Caco-2 (cell line): ENCODE measurements at regions of chr11 and their contacts with region 1.

Region 1: DNA sequence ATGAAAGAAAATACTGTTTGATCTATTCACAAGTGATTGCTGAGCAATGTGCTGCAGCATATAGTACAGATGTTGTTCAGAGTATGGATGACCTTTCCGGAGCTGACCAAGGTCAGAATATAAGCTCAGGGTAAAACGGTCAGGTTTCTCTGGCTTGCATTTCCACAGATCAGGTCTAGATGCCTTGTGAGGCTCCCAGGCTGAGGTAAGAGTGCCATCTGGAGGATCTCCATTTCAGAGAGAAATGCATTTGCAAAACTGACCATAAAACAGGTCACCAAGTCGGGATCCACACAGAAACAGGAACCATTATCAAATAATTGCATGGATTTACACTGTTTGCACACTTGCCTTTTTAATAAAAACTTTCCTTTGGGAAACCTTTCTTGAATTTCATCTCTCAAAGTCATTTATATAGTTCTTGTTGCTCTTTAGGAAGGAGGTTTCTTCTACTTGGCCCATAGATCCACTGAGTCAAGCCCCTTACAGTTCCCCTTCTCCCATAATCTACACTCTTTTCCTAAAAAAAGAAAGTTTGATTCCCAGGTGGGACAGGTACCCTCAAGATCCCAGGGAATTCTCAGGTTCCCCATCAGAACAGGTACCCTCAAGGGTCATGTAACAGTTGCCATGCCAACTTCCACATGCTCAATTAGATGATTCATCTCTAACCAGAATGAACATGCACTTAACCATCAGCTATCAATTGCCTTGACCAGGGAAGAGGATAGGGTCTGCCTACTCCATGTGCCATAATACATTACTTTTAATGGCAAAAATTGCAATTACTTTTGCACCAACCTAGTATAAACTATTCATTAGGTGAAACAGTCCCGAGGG is 25.0 kb upstream of the TMPRSS5 start:
- DNase-seq: peak; percentile 83 to 86
- H3K4me3 ChIP-seq: no peak overlapping the region
- H3K4me3 Mint-ChIP-seq: no peak overlapping the region
- H3K27ac Mint-ChIP-seq: no peak overlapping the region
- H3K4me1 ChIP-seq: peaks cover 45% of the 10 kb centered on the region
- H3K4me1 Mint-ChIP-seq: peaks cover 27% of the 10 kb centered on the region
- H3K27me3 ChIP-seq: no peaks in the 10 kb centered on the region
- H3K27me3 Mint-ChIP-seq: no peaks in the 10 kb centered on the region
- CTCF ChIP-seq: peak; percentile 89 to 92

Region 2: DNA sequence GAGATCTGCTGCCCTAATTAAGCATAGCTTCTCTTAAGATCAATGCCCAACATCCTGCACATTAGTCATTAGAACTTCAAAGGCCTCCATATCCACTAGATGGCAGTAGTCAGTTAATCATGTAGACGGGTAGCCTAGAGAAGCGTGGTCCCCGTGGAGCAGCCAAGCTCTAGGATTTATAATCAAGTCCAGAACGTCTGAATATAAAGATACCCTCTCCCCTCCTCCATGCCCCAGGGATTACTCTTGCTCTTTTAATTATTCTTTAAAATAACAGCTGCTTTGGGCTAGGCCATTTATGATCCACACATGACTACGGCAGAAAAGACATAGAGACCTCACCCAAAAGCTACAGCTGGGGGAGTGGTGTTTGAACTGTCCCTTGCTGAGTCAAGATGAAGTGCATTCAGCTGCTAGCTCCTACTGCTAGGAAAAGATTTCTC is 1142.8 kb before region 1 on chr11:
- CTCF ChIA-PET with region 1: no interaction called
- POLR2A ChIA-PET with region 1: no interaction called
- intact Hi-C with region 1: loop called (anchors 5 kb)
- DNase-seq: peak; percentile 69 to 81
- H3K4me3 ChIP-seq: no peak overlapping the region
- H3K4me3 Mint-ChIP-seq: no peak overlapping the region
- H3K27ac Mint-ChIP-seq: no peak overlapping the region
- H3K4me1 ChIP-seq: no peaks in the 10 kb centered on the region
- H3K4me1 Mint-ChIP-seq: no peaks in the 10 kb centered on the region
- H3K27me3 ChIP-seq: no peaks in the 10 kb centered on the region; the same call in none of the 2 replicates
- H3K27me3 Mint-ChIP-seq: peaks cover 14% of the 10 kb centered on the region
- CTCF ChIP-seq: peak; percentile 74 to 90

Region 3: GRCh38 chr11:113314389-113315301 is 416.5 kb before region 1 on chr11 and contains the start of gene TTC12:
- CTCF ChIA-PET with region 1: interaction called, 14 read pairs
- POLR2A ChIA-PET with region 1: interaction called, 18 read pairs
- intact Hi-C with region 1: loop called (anchors 1 kb)
- DNase-seq: peak; percentile 97 to 99
- H3K4me3 ChIP-seq: peak within 1 kb of the TSS; percentile 72
- H3K4me3 Mint-ChIP-seq: peak within 1 kb of the TSS; percentile 70
- H3K27ac Mint-ChIP-seq: peak within 1 kb of the TSS; percentile 35
- H3K4me1 ChIP-seq: peaks cover 10% of the 10 kb centered on the region
- H3K4me1 Mint-ChIP-seq: peaks cover 6% of the 10 kb centered on the region
- H3K27me3 ChIP-seq: no peaks in the 10 kb centered on the region
- H3K27me3 Mint-ChIP-seq: no peaks in the 10 kb centered on the region
- CTCF ChIP-seq: no peak
- total RNA-seq, gene TTC12: 19.4 and 20.8 TPM in 2 replicates

Region 4: DNA sequence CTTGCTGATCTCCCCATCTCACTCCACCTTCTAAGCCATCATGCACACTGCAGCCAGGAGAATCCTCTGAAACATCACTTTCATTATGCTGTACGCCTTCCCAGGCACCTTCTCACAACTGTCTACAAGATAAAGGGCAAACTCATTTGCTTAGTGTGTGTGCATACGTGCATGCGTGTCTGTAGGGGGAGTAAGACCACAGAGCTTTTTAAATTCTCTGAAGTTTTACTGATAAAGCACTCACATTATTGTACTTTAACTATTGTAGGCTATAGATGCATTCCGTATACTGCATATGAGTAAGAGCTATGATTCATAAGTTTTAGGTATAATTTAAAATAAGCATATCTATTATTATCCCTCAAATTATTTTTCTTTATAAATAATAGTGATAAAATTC is 358.8 kb before region 1 on chr11:
- CTCF ChIA-PET with region 1: no interaction called
- POLR2A ChIA-PET with region 1: no interaction called
- intact Hi-C with region 1: loop called (anchors 1 kb)
- DNase-seq: no peak
- H3K4me3 ChIP-seq: no peak overlapping the region
- H3K4me3 Mint-ChIP-seq: no peak overlapping the region
- H3K27ac Mint-ChIP-seq: no peak overlapping the region
- H3K4me1 ChIP-seq: no peaks in the 10 kb centered on the region
- H3K4me1 Mint-ChIP-seq: no peaks in the 10 kb centered on the region
- H3K27me3 ChIP-seq: no peaks in the 10 kb centered on the region
- H3K27me3 Mint-ChIP-seq: no peaks in the 10 kb centered on the region
- CTCF ChIP-seq: peak in 1 of 2 experiments; percentile 51

Region 5: GRCh38 chr11:113532697-113533424 is 198.2 kb before region 1 on chr11:
- CTCF ChIA-PET with region 1: interaction called, 16 read pairs
- POLR2A ChIA-PET with region 1: interaction called, 8 read pairs
- intact Hi-C with region 1: loop called (anchors 1 kb)
- DNase-seq: peak; percentile 85 to 87
- H3K4me3 ChIP-seq: no peak overlapping the region
- H3K4me3 Mint-ChIP-seq: no peak overlapping the region
- H3K27ac Mint-ChIP-seq: peak overlapping the region; percentile 55
- H3K4me1 ChIP-seq: peaks cover 37% of the 10 kb centered on the region
- H3K4me1 Mint-ChIP-seq: peaks cover 44% of the 10 kb centered on the region
- H3K27me3 ChIP-seq: no peaks in the 10 kb centered on the region
- H3K27me3 Mint-ChIP-seq: no peaks in the 10 kb centered on the region
- CTCF ChIP-seq: peak; percentile 98

Region 6: GRCh38 chr11:113553235-113553634 is 177.9 kb before region 1 on chr11:
- CTCF ChIA-PET with region 1: interaction called, 18 read pairs
- POLR2A ChIA-PET with region 1: no interaction called
- intact Hi-C with region 1: loop called (anchors 2 kb)
- DNase-seq: peak in 1 of 2 experiments; percentile 47
- H3K4me3 ChIP-seq: no peak overlapping the region
- H3K4me3 Mint-ChIP-seq: peak overlapping the region; percentile 12
- H3K27ac Mint-ChIP-seq: peak overlapping the region; percentile 46
- H3K4me1 ChIP-seq: peaks cover 55% of the 10 kb centered on the region
- H3K4me1 Mint-ChIP-seq: peaks cover 45% of the 10 kb centered on the region
- H3K27me3 ChIP-seq: no peaks in the 10 kb centered on the region
- H3K27me3 Mint-ChIP-seq: no peaks in the 10 kb centered on the region
- CTCF ChIP-seq: no peak

Region 7: GRCh38 chr11:113773416-113774173 is 42.5 kb after region 1 on chr11 and contains the start of gene ZW10:
- CTCF ChIA-PET with region 1: interaction called, 12 read pairs
- POLR2A ChIA-PET with region 1: interaction called, 6 read pairs
- intact Hi-C with region 1: loop called (anchors 1 kb)
- DNase-seq: peak; percentile 97 to 99
- H3K4me3 ChIP-seq: peak within 1 kb of the TSS; percentile 72
- H3K4me3 Mint-ChIP-seq: peak within 1 kb of the TSS; percentile 99
- H3K27ac Mint-ChIP-seq: peak within 1 kb of the TSS; percentile 97
- H3K4me1 ChIP-seq: peaks cover 5% of the 10 kb centered on the region; the same call in 1 of the 2 replicates
- H3K4me1 Mint-ChIP-seq: peaks cover 7% of the 10 kb centered on the region
- H3K27me3 ChIP-seq: no peaks in the 10 kb centered on the region
- H3K27me3 Mint-ChIP-seq: peaks cover 3% of the 10 kb centered on the region
- CTCF ChIP-seq: peak; percentile 97
- total RNA-seq, gene ZW10: 43.1 and 44.0 TPM in 2 replicates